Activated naive CD4-positive, alpha-beta T cell treated with anti-CD3 and anti-CD28 coated beads for 36 hours (primary cell): ENCODE measurements at regions of chr9 and their contacts with region 1.

Region 1: DNA sequence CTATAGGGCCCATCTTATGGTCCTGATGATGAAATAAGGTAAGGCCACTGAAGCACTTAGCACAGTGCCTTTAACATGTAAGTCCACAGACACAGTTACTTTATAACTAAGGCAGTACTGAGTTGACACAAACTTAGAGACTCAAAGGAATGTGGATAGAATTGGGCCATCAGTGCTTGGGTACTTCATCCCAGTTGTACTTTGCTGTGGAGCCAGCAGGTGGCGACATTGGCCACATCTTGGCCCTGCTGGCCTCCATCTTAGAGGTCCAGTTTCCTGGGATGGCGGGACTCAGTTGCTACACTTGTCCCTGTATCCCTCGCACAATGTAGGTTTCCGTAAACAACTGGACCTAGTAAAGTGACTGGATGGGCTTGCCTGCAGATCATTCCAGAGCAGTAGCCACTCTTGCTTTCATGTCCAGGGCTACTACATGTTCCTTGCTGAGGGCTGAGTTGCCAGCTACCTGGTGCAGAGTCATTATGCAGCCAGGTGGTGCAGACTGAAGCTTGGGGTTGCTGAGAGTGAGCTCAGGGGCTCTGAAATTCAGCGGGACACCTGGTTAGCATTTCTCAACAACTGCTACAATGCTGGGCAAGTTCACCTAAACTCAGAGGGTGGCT is 10.6 kb downstream of the MTAP start:
- DNase-seq: peak; percentile 76
- H3K4me3 Mint-ChIP-seq: no peak overlapping the region
- H3K27ac Mint-ChIP-seq: no peak overlapping the region
- H3K4me1 Mint-ChIP-seq: peaks cover 56% of the 10 kb centered on the region
- H3K27me3 Mint-ChIP-seq: no peaks in the 10 kb centered on the region

Region 2: GRCh38 chr9:21761309-21761901 is 51.7 kb before region 1 on chr9:
- CTCF ChIA-PET with region 1: no interaction called
- intact Hi-C with region 1: loop called (anchors 2 kb)
- DNase-seq: peak; percentile 60
- H3K4me3 Mint-ChIP-seq: no peak overlapping the region
- H3K27ac Mint-ChIP-seq: no peak overlapping the region
- H3K4me1 Mint-ChIP-seq: peaks cover 13% of the 10 kb centered on the region
- H3K27me3 Mint-ChIP-seq: peaks cover 29% of the 10 kb centered on the region

Region 3: GRCh38 chr9:21831961-21832509 is 19.0 kb after region 1 on chr9:
- CTCF ChIA-PET with region 1: interaction called, 8 read pairs
- intact Hi-C with region 1: loop called (anchors 1 kb)
- DNase-seq: peak; percentile 83
- H3K4me3 Mint-ChIP-seq: no peak overlapping the region
- H3K27ac Mint-ChIP-seq: peak overlapping the region; percentile 77
- H3K4me1 Mint-ChIP-seq: peaks cover 65% of the 10 kb centered on the region
- H3K27me3 Mint-ChIP-seq: no peaks in the 10 kb centered on the region

Region 4: GRCh38 chr9:21995177-21996086 is 182.4 kb after region 1 on chr9:
- CTCF ChIA-PET with region 1: interaction called, 3 read pairs
- intact Hi-C with region 1: loop called (anchors 1 kb)
- DNase-seq: peak; percentile 77
- H3K4me3 Mint-ChIP-seq: peak overlapping the region; percentile 87
- H3K27ac Mint-ChIP-seq: peak overlapping the region; percentile 36
- H3K4me1 Mint-ChIP-seq: peaks cover 10% of the 10 kb centered on the region
- H3K27me3 Mint-ChIP-seq: peaks cover 42% of the 10 kb centered on the region

Region 5: GRCh38 chr9:22037954-22038690 is 225.1 kb after region 1 on chr9:
- CTCF ChIA-PET with region 1: interaction called, 81 read pairs
- intact Hi-C with region 1: loop called (anchors 1 kb)
- DNase-seq: no peak
- H3K4me3 Mint-ChIP-seq: no peak overlapping the region
- H3K27ac Mint-ChIP-seq: no peak overlapping the region
- H3K4me1 Mint-ChIP-seq: peaks cover 9% of the 10 kb centered on the region
- H3K27me3 Mint-ChIP-seq: peaks cover 16% of the 10 kb centered on the region

Region 6: GRCh38 chr9:22238809-22239684 is 426.0 kb after region 1 on chr9:
- CTCF ChIA-PET with region 1: interaction called, 21 read pairs
- intact Hi-C with region 1: loop called (anchors 1 kb)
- DNase-seq: no peak
- H3K4me3 Mint-ChIP-seq: no peak overlapping the region
- H3K27ac Mint-ChIP-seq: no peak overlapping the region
- H3K4me1 Mint-ChIP-seq: peaks cover 49% of the 10 kb centered on the region
- H3K27me3 Mint-ChIP-seq: peaks cover 15% of the 10 kb centered on the region

Region 7: DNA sequence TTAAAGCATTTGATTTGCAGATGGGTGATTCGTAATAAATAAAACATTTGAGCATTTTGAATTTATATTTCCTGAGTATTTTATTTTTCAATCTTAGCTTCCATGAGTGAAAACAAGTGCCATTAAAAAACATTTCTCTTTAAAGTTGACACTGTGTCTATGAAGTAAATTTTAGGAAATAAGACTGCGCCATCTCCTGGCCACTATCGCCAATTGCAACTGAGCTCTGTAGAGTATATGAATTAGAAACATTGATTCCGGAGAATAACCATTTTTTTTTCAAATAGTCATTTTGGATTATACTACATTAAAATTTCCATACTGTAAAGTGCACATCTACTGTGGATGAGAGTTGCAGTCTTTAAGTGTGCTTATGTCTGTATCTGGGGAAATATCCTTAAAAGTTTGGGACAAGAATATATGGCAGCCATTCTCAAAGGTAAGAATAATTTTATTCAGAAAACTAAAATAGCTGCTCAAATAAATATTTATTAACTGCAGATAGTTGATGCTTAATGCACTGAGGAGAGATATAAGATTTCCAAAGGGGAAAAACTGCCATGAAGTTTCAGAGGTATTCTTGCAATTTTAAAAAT is 639.5 kb after region 1 on chr9:
- CTCF ChIA-PET with region 1: interaction called, 9 read pairs
- intact Hi-C with region 1: loop called (anchors 1 kb)
- DNase-seq: peak; percentile 68
- H3K4me3 Mint-ChIP-seq: no peak overlapping the region
- H3K27ac Mint-ChIP-seq: no peak overlapping the region
- H3K4me1 Mint-ChIP-seq: peaks cover 2% of the 10 kb centered on the region
- H3K27me3 Mint-ChIP-seq: peaks cover 37% of the 10 kb centered on the region